GM12878 (cell line): ENCODE measurements at regions of chr20 and their contacts with region 1.

Region 1: GRCh38 chr20:49668181-49668877 is 45.3 kb downstream of the B4GALT5 start:
- DNase-seq: peak; percentile 96
- ATAC-seq: peak; percentile 92
- H3K4me3 ChIP-seq: peak overlapping the region; percentile 59; the same call in 1 of the 2 replicates
- H3K27ac ChIP-seq: peak overlapping the region; percentile 86
- H3K4me1 ChIP-seq: peaks cover 52% of the 10 kb centered on the region
- H3K27me3 ChIP-seq: no peaks in the 10 kb centered on the region
- CTCF ChIP-seq: no peak
- EP300 ChIP-seq: peak; percentile 69 to 74; a peak in 2 of 4 replicates
- POLR2A ChIP-seq: peak; percentile 83
- RAD21 ChIP-seq: no peak

Region 2: GRCh38 chr20:49505518-49505917 is 162.8 kb before region 1 on chr20:
- CTCF ChIA-PET with region 1: no interaction called
- POLR2A ChIA-PET with region 1: no interaction called
- RAD21 ChIA-PET with region 1: no interaction called
- SMC1A ChIA-PET with region 1: no interaction called
- in situ Hi-C with region 1: no loop called
- intact Hi-C with region 1: no loop called
- DNase-seq: no peak
- ATAC-seq: no peak
- H3K4me3 ChIP-seq: no peak overlapping the region
- H3K27ac ChIP-seq: no peak overlapping the region
- H3K4me1 ChIP-seq: no peaks in the 10 kb centered on the region
- H3K27me3 ChIP-seq: peaks cover 0 to 4% of the 10 kb centered on the region in 2 experiments; a peak in 2 of 4 replicates
- CTCF ChIP-seq: no peak
- EP300 ChIP-seq: no peak
- POLR2A ChIP-seq: no peak
- RAD21 ChIP-seq: no peak

Region 3: GRCh38 chr20:49602345-49603208 is 65.8 kb before region 1 on chr20:
- CTCF ChIA-PET with region 1: no interaction called
- POLR2A ChIA-PET with region 1: no interaction called
- RAD21 ChIA-PET with region 1: no interaction called
- SMC1A ChIA-PET with region 1: no interaction called
- in situ Hi-C with region 1: no loop called
- intact Hi-C with region 1: no loop called
- DNase-seq: no peak
- ATAC-seq: no peak
- H3K4me3 ChIP-seq: no peak overlapping the region
- H3K27ac ChIP-seq: no peak overlapping the region
- H3K4me1 ChIP-seq: peaks cover 5% of the 10 kb centered on the region
- H3K27me3 ChIP-seq: peaks cover 0 to 2% of the 10 kb centered on the region in 2 experiments; a peak in 1 of 4 replicates
- CTCF ChIP-seq: no peak
- EP300 ChIP-seq: no peak
- POLR2A ChIP-seq: no peak
- RAD21 ChIP-seq: no peak

Region 4: DNA sequence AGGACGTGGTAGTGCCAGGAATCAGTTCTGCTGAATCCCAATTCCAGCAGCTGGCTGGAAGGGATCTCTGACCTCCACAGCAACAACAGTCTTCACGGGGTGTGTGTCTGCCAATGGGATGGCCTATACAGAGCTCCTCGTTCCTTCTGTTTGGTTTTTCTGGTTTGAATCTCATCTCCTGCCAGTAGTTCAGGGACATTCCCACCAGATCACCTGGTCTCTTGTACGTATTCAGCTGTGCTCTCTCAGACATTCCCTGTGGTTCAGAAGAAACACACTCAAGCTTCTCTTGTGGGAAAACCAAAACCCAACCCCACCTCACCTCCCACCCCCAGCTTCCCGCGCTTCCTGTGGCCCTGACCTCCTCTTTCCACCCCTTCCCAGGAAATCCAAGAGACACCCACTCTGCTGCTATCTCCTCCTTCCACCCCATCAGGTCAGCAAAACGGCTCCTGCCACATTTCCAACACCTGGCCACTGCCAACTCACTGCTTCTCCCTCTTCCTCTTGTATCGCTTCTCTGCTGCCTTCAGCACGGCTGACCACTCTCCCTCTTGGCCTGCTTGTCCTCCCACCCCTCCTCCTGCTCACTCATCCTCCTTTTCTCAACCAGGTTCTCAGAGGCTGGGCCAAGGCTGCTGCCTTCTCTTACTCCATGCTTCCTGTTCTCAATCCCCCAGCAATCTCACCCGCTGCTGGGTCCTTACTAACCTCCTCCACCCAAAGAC is 37.1 kb before region 1 on chr20:
- CTCF ChIA-PET with region 1: interaction called, 18 read pairs
- POLR2A ChIA-PET with region 1: interaction called, 15 read pairs
- RAD21 ChIA-PET with region 1: interaction called, 53 read pairs
- SMC1A ChIA-PET with region 1: interaction called, 110 read pairs
- in situ Hi-C with region 1: no loop called
- intact Hi-C with region 1: no loop called
- DNase-seq: no peak
- ATAC-seq: peak; percentile 75
- H3K4me3 ChIP-seq: no peak overlapping the region
- H3K27ac ChIP-seq: peak overlapping the region; percentile 77
- H3K4me1 ChIP-seq: peaks cover 53% of the 10 kb centered on the region
- H3K27me3 ChIP-seq: no peaks in the 10 kb centered on the region
- CTCF ChIP-seq: no peak
- EP300 ChIP-seq: peak in 1 of 2 experiments; percentile 39; a peak in 1 of 4 replicates
- POLR2A ChIP-seq: no peak; the same call in 1 of the 2 replicates
- RAD21 ChIP-seq: no peak

Region 5: GRCh38 chr20:49690899-49691620 is 22.7 kb after region 1 on chr20:
- CTCF ChIA-PET with region 1: interaction called, 12 read pairs
- POLR2A ChIA-PET with region 1: interaction called, 5 read pairs
- RAD21 ChIA-PET with region 1: interaction called, 13 read pairs
- SMC1A ChIA-PET with region 1: interaction called, 26 read pairs
- in situ Hi-C with region 1: no loop called
- intact Hi-C with region 1: no loop called
- DNase-seq: no peak
- ATAC-seq: peak; percentile 42
- H3K4me3 ChIP-seq: no peak overlapping the region
- H3K27ac ChIP-seq: peak overlapping the region; percentile 12; the same call in 1 of the 2 replicates
- H3K4me1 ChIP-seq: peaks cover 52% of the 10 kb centered on the region
- H3K27me3 ChIP-seq: no peaks in the 10 kb centered on the region
- CTCF ChIP-seq: no peak
- EP300 ChIP-seq: no peak
- POLR2A ChIP-seq: no peak
- RAD21 ChIP-seq: no peak

Region 6: DNA sequence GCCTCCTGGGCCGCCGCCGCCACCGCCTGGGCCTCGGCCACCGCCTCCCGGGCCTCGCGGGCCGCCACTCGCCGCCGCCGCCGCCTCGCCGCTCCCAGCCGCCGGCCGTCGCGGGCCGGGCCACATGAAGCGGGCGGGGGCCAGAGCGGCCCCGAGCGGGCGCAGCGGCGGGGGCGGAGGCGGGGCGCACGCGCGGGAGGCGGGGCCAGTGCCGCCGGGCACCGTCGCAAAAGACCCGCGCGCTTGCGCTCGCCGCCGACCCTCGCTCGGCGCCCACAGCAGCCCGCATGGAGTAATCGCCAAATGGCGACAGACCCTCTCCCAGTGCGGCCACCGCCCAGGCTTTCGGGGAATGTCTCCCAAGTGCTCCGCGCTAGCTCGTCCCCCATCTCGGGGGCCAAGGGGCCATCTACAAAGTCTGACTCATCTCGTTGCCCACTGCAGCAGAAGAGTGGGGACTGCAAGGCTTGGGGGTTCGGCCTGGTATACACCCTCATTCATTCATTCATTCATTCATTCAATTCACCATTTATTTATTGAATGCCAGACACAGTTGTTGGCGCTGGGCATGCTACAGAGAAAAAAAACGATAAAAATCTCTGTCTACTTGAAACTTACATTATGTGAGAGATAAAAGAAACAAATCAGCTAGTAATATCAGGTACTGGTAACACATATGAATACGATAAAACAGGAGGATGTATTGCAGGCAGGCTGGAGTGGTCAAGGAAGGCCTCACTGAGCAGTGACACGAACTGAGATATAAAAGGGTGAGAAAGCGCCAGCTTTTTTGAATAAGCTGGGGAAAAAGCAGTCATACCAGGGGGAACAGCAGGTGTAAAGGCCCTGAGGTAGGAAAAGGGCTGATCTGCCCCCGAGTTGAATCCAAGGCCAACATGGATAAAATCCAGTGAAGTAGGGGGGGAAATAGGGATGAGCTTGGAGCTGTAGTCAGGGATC is 45.7 kb after region 1 on chr20 and contains the start of gene B4GALT5:
- CTCF ChIA-PET with region 1: interaction called, 6 read pairs
- POLR2A ChIA-PET with region 1: interaction called, 8 read pairs
- RAD21 ChIA-PET with region 1: interaction called, 36 read pairs
- SMC1A ChIA-PET with region 1: interaction called, 89 read pairs
- in situ Hi-C with region 1: no loop called
- intact Hi-C with region 1: no loop called
- DNase-seq: no peak
- ATAC-seq: peak; percentile 76
- H3K4me3 ChIP-seq: peak within 1 kb of the TSS; percentile 97
- H3K27ac ChIP-seq: peak within 1 kb of the TSS; percentile 80
- H3K4me1 ChIP-seq: peaks cover 5% of the 10 kb centered on the region; the same call in 1 of the 2 replicates
- H3K27me3 ChIP-seq: no peaks in the 10 kb centered on the region
- CTCF ChIP-seq: no peak
- EP300 ChIP-seq: no peak
- POLR2A ChIP-seq: no peak
- RAD21 ChIP-seq: no peak
- polyA plus RNA-seq, gene B4GALT5: 10.0 to 15.3 TPM

Region 7: DNA sequence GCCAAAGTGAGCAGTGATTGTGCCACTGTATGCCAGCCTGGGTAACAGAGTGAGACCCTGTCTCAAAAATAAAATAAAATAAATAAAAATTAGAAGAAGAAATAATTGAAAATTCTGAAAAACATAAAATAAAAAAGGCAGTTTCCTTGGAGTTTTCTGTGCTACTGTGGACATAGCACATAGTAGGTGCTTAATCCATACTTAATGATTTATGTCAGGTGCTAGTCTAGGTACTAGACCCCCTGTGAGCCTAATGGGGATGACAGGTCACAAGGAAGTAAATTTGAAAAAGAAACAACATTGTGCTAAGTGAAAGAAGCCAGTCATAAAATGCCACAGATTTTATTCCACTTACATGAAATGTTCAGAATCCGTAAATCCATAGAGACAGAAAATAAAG is 135.1 kb after region 1 on chr20:
- CTCF ChIA-PET with region 1: interaction called, 13 read pairs
- POLR2A ChIA-PET with region 1: interaction called, 4 read pairs
- RAD21 ChIA-PET with region 1: interaction called, 20 read pairs
- SMC1A ChIA-PET with region 1: interaction called, 26 read pairs
- in situ Hi-C with region 1: no loop called
- intact Hi-C with region 1: no loop called
- DNase-seq: no peak
- ATAC-seq: no peak
- H3K4me3 ChIP-seq: no peak overlapping the region
- H3K27ac ChIP-seq: no peak overlapping the region
- H3K4me1 ChIP-seq: peaks cover 43% of the 10 kb centered on the region
- H3K27me3 ChIP-seq: no peaks in the 10 kb centered on the region
- CTCF ChIP-seq: no peak
- EP300 ChIP-seq: no peak
- POLR2A ChIP-seq: no peak
- RAD21 ChIP-seq: no peak

Region 8: DNA sequence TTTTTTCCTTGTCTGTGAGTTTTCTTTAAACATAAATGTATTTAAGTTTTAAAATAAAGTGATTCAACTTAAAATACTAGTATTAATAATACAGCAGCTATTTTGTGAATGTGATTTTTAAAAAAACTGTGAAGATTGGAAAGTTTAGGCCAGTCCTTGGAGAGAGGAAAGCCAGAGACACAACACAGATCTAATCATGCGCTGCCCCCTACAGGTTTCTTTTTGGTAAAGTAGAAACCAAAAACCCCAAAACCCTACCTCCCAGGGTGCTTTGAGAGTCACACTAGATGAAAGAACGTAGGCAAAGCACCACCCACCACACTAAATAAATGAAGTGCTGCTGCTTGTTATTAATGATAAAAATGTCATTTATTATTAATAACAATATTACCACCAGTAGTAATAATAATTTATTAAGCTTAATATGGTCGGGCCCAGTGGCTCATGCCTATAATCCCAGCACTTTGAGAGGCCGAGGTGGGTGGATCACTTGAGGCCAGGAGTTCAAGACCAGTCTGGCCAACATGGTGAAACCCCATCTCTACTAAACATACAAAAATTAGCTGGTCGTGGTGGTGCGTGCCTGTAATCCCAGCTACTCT is 178.0 kb after region 1 on chr20:
- CTCF ChIA-PET with region 1: interaction called, 22 read pairs
- POLR2A ChIA-PET with region 1: no interaction called
- RAD21 ChIA-PET with region 1: interaction called, 11 read pairs
- SMC1A ChIA-PET with region 1: interaction called, 8 read pairs
- in situ Hi-C with region 1: no loop called
- intact Hi-C with region 1: no loop called
- DNase-seq: no peak
- ATAC-seq: peak; percentile 96
- H3K4me3 ChIP-seq: no peak overlapping the region
- H3K27ac ChIP-seq: no peak overlapping the region
- H3K4me1 ChIP-seq: peaks cover 4% of the 10 kb centered on the region; the same call in 1 of the 2 replicates
- H3K27me3 ChIP-seq: no peaks in the 10 kb centered on the region
- CTCF ChIP-seq: peak; percentile 51 to 77 (median 60)
- EP300 ChIP-seq: no peak
- POLR2A ChIP-seq: no peak
- RAD21 ChIP-seq: peak; percentile 86